Mammary epithelial cell (primary cell): ENCODE measurements at regions of chrX and their contacts with region 1.

Region 1: DNA sequence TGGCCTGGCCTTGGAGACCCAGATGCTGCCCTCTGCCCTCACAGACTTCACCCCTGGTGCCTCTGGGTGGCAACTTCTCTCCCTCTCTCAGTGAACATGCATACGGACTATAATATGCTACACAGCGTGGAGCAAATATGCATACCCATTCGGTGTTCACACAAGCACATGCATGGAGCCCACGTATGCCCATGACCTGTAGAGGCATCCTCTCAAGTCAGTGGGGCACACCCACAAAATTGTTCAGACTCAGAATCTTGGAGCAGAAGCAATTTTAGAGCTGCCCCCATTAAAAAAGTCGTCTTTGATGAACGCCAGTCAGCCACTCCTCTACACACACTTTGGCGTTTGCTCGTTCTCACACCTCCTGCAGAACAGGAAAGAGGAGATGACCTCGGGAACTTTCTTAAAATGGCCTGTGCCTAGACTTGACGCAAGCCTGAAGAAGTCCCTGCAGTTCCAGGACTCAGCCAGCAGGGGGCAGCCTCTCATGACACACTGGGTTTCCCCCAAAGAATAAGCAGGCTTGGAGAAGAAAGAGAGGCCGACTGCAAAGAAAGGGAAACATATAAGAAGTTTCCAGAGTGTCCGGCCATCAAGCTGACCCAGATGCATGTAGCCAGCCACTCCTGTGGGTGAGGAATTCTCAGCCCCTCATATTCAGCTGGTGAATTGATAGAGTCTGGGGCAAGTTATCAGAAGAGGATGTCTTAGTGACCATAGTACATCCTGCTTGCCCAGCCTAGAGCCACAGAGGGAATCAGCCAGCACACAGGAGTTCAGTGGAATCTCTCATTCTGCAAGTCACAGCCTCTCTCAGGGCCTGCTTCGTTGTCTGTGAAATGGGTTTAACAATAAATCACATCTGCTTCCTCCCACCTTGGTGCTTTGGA is 17.3 kb downstream of the APLN start:
- DNase-seq: peak; percentile 40
- H3K4me3 ChIP-seq: no peak overlapping the region
- H3K27ac ChIP-seq: no peak overlapping the region
- H3K4me1 ChIP-seq: peaks cover 5% of the 10 kb centered on the region
- H3K27me3 ChIP-seq: no peaks in the 10 kb centered on the region
- CTCF ChIP-seq: peak; percentile 92 to 96

Region 2: GRCh38 chrX:129719931-129720530 is 82.6 kb after region 1 on chrX:
- CTCF ChIA-PET with region 1: no interaction called
- dilution Hi-C with region 1: loop called (anchors 5 kb)
- in situ Hi-C with region 1: no loop called
- intact Hi-C with region 1: no loop called
- DNase-seq: no peak
- H3K4me3 ChIP-seq: no peak overlapping the region
- H3K27ac ChIP-seq: no peak overlapping the region
- H3K4me1 ChIP-seq: peaks cover 17% of the 10 kb centered on the region
- H3K27me3 ChIP-seq: no peaks in the 10 kb centered on the region
- CTCF ChIP-seq: no peak

Region 3: DNA sequence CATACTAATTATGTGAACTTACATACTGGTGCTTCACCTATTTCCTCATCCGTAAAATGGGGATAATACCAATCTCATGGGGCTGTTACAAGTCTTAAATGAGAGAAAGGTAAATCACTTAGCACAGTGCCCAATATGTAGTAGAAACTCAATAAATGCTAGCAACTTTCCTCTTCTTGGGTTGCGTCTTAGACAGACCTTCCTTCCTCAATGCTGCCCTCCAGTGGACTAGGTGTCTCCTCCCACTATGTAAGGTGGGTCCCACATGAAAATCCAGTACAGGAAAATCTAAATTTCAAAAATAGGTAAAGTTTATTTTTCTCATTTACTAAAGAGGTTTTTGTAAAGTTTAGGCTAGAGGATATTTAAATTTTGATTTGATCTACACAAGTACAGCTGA is 185.7 kb after region 1 on chrX:
- CTCF ChIA-PET with region 1: no interaction called
- dilution Hi-C with region 1: no loop called
- in situ Hi-C with region 1: no loop called
- intact Hi-C with region 1: loop called (anchors 1 kb)
- DNase-seq: peak; percentile 12
- H3K4me3 ChIP-seq: no peak overlapping the region
- H3K27ac ChIP-seq: no peak overlapping the region
- H3K4me1 ChIP-seq: no peaks in the 10 kb centered on the region
- H3K27me3 ChIP-seq: no peaks in the 10 kb centered on the region
- CTCF ChIP-seq: peak; percentile 49 to 53